ENCODE measurements at regions of chr18 and their contacts with region 1.

Region 1: DNA sequence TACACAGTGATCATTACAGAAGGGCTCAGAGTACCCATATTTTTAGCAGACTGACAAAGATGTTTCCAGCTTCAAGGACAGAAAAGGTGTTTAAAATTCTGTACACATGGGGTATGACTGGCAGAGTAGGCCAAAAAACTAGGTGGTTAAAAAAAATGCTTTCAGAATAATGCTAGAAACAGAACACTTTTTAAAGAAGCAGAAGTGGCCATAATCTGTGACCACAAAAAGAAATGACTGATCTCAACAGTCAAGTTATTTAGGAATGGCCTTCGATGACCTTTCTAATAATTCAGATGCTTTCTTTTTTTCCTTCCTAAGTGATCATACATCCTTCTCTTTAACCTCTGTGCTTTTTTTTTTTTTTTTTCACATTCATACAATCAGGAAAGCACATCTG is 4.1 kb upstream of the AQP4 start:
- DNase-seq: no peak
- H3K4me3 ChIP-seq: no peak overlapping the region
- H3K27ac ChIP-seq: no peak overlapping the region
- H3K4me1 ChIP-seq: no peaks in the 10 kb centered on the region
- H3K27me3 ChIP-seq: no peaks in the 10 kb centered on the region
- CTCF ChIP-seq: no peak

Region 2: DNA sequence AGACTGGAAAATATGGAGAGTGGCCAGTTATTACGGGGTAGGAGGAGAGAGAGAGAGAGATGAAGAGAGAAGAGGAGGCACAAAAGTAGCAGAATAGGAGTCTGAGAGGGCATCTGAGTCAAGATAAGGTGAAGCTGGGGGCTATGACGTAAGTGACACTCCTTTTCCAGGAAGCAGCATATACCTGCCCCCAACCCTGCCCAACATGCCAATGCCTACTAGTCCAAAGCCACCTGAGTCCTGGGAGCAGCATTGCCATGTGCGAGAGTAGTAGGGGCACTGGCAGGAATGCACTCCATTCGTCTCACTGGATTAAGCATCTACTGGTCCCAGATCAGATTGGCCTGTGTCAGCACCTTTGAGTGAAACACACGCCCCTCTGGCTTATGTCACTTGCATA is 60.1 kb after region 1 on chr18:
- intact Hi-C with region 1: loop called (anchors 10 kb)
- DNase-seq: no peak
- H3K4me3 ChIP-seq: no peak overlapping the region
- H3K27ac ChIP-seq: no peak overlapping the region
- H3K4me1 ChIP-seq: no peaks in the 10 kb centered on the region
- H3K27me3 ChIP-seq: no peaks in the 10 kb centered on the region
- CTCF ChIP-seq: no peak

Measured in ascending aorta (tissue), 2 donors.